Naive thymus-derived CD4-positive, alpha-beta T cell (primary cell): ENCODE measurements at regions of chr2 and their contacts with region 1.

Region 1: DNA sequence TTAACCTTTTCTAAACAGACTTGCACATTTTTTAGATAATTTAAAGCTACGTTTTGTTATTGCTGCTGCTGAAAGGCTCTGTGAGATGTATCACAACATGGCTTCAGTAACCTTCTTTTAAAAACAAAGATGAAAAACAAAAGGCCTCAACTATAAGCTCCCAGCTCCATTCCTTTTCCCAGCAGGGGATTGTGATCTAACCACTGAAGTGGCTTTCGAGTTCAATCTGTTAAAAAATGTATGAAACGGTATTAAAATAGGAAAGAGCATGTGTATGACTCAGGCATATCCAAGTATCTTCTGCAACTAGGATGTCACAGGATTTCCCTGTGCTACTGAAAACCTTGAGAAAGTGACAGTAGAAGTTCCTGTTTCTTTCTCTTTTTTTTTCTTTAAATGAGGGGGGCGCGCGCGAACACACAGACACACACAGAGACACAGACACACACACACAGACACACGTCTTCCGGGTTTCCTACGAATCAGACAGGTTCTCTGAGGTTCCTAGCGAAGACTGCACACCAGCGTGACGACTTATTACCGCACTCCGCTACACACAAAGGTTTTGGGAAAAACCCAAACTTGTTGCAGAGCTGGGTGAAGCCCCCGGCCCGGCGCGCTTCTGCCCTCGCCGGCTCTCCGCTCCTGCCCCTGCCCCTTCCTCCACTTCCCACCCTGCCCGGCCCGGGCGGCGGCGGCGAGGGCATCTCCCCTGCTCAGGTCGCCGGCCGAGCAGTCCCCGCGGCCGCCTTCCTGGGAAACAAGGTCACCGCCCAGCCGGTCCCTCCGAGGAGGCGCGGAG is 86.8 kb downstream of the RBMS1 start:
- DNase-seq: peak; percentile 60 to 95 (median 85)
- ATAC-seq: peak; percentile 92
- H3K4me3 ChIP-seq: peak overlapping the region; percentile 57
- H3K4me3 Mint-ChIP-seq: peak overlapping the region; percentile 87 to 99 (median 92)
- H3K27ac ChIP-seq: peak overlapping the region; percentile 99
- H3K27ac Mint-ChIP-seq: peak overlapping the region; percentile 90 to 99 (median 95)
- H3K4me1 ChIP-seq: peaks cover 54 to 64% of the 10 kb centered on the region in 2 donors
- H3K4me1 Mint-ChIP-seq: peaks cover 37 to 89% (median 80%) of the 10 kb centered on the region in 7 donors
- H3K27me3 ChIP-seq: no peaks in the 10 kb centered on the region
- H3K27me3 Mint-ChIP-seq: peaks cover 0 to 4% (median 0%) of the 10 kb centered on the region in 5 donors

Region 2: GRCh38 chr2:160269803-160270570 is 136.8 kb before region 1 on chr2:
- CTCF ChIA-PET with region 1: no interaction called
- POLR2A ChIA-PET with region 1: interaction called, 3 read pairs
- intact Hi-C with region 1: loop called in 1 of 2 experiments (anchors 5 kb)
- DNase-seq: peak; percentile 43 to 68 (median 63)
- ATAC-seq: peak; percentile 89
- H3K4me3 ChIP-seq: peak overlapping the region; percentile 59
- H3K4me3 Mint-ChIP-seq: peak overlapping the region; percentile 75 to 95 (median 88)
- H3K27ac ChIP-seq: peak overlapping the region; percentile 66
- H3K27ac Mint-ChIP-seq: peak overlapping the region; percentile 42 to 97 (median 89)
- H3K4me1 ChIP-seq: peaks cover 5 to 7% of the 10 kb centered on the region in 2 donors
- H3K4me1 Mint-ChIP-seq: peaks cover 9 to 44% (median 32%) of the 10 kb centered on the region in 7 donors
- H3K27me3 ChIP-seq: no peaks in the 10 kb centered on the region
- H3K27me3 Mint-ChIP-seq: peaks cover 0 to 10% (median 0%) of the 10 kb centered on the region in 5 donors

Region 3: GRCh38 chr2:160353166-160353565 is 53.6 kb before region 1 on chr2:
- CTCF ChIA-PET with region 1: no interaction called
- POLR2A ChIA-PET with region 1: interaction called, 3 read pairs
- intact Hi-C with region 1: loop called in 1 of 2 experiments (anchors 1 kb)
- DNase-seq: peak in 6 of 9 donors; percentile 14 to 45 (median 24)
- ATAC-seq: peak; percentile 72
- H3K4me3 ChIP-seq: no peak overlapping the region
- H3K4me3 Mint-ChIP-seq: peak overlapping the region in 1 of 10 donors; percentile 36
- H3K27ac ChIP-seq: no peak overlapping the region
- H3K27ac Mint-ChIP-seq: peak overlapping the region in 4 of 9 donors; percentile 51 to 81 (median 66)
- H3K4me1 ChIP-seq: peaks cover 0 to 5% of the 10 kb centered on the region in 2 donors
- H3K4me1 Mint-ChIP-seq: peaks cover 47 to 91% (median 83%) of the 10 kb centered on the region in 7 donors
- H3K27me3 ChIP-seq: no peaks in the 10 kb centered on the region
- H3K27me3 Mint-ChIP-seq: no peaks in the 10 kb centered on the region

Region 4: DNA sequence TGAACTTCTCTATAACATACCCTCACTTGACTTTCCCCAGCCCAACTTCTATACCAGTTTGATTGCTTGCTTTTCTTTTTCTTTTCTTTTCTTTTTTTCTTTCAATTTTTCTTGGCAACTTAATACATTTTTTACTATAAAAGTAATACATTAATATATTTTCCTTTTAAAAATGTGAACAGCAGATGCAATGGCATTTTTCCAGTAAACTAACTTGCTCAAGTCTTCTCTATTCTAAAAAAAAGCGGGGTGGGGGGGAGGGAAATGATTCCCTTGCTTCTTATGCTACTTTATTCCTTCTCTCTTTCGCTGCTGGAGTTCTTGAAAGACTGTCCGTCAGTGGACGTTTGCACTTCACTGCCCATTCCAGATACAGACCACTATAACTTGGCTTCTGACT is 16.3 kb after region 1 on chr2:
- CTCF ChIA-PET with region 1: interaction called, 15 read pairs
- POLR2A ChIA-PET with region 1: interaction called, 57 read pairs
- intact Hi-C with region 1: loop called (anchors 1 kb)
- DNase-seq: no peak
- ATAC-seq: no peak
- H3K4me3 ChIP-seq: no peak overlapping the region
- H3K4me3 Mint-ChIP-seq: peak overlapping the region in 5 of 10 donors; percentile 16 to 69 (median 64)
- H3K27ac ChIP-seq: no peak overlapping the region
- H3K27ac Mint-ChIP-seq: peak overlapping the region in 7 of 9 donors; percentile 6 to 83 (median 61)
- H3K4me1 ChIP-seq: peaks cover 28 to 44% of the 10 kb centered on the region in 2 donors
- H3K4me1 Mint-ChIP-seq: peaks cover 41 to 92% (median 83%) of the 10 kb centered on the region in 7 donors
- H3K27me3 ChIP-seq: no peaks in the 10 kb centered on the region
- H3K27me3 Mint-ChIP-seq: no peaks in the 10 kb centered on the region

Region 5: DNA sequence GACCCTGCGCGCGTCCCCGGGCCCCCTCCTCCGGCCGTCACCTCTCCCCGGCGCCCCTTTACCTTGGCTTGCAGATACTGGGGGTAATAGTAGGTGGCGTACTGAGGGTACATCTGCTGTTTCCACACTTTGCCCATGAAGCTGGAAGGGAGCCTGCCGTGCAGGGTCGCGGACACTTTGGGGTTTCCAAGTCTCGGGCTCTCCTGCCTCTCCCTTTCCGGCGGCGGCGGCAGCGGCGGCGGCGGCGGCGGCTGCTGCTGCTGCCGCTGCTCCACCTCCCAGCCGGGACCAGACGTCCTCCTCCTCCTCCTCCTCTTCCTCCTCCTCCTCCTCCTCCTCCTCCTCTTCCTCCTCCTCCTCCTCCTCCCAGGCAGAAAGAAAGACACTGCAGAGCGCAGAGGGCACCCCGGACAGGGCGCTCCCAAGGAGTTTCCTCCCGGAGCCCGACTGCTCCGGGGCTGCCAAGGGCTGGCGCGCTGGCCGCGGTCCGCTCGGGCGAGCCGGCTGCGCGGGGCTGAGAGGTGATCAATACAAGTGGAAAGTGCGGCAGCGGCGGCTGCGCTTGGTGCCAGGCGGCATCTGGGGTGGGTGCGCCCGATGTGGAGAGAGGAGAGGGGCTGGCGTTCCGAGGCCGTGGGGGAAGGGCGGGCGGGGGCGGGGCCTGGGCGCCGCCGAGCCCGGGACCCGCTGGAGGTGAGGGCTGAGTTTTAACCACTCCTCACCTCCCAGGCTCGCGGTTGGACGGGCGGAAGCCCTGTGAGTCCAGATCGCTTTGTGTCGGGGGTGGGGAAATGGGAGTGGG is 86.6 kb after region 1 on chr2 and contains the start of gene RBMS1:
- CTCF ChIA-PET with region 1: interaction called, 5 read pairs
- POLR2A ChIA-PET with region 1: interaction called, 5 read pairs
- intact Hi-C with region 1: loop called (anchors 1 kb)
- DNase-seq: peak; percentile 36 to 63 (median 57)
- ATAC-seq: peak; percentile 55
- H3K4me3 ChIP-seq: peak within 1 kb of the TSS; percentile 64
- H3K4me3 Mint-ChIP-seq: peak within 1 kb of the TSS; percentile 87 to 98 (median 96)
- H3K27ac ChIP-seq: peak within 1 kb of the TSS; percentile 96
- H3K27ac Mint-ChIP-seq: peak within 1 kb of the TSS; percentile 91 to 98 (median 97)
- H3K4me1 ChIP-seq: peaks cover 3 to 10% of the 10 kb centered on the region in 2 donors
- H3K4me1 Mint-ChIP-seq: peaks cover 17 to 56% (median 47%) of the 10 kb centered on the region in 7 donors
- H3K27me3 ChIP-seq: no peaks in the 10 kb centered on the region
- H3K27me3 Mint-ChIP-seq: peaks cover 0 to 12% (median 0%) of the 10 kb centered on the region in 5 donors
- total RNA-seq, gene RBMS1: 74.4 to 123 (median 101) TPM

Region 6: DNA sequence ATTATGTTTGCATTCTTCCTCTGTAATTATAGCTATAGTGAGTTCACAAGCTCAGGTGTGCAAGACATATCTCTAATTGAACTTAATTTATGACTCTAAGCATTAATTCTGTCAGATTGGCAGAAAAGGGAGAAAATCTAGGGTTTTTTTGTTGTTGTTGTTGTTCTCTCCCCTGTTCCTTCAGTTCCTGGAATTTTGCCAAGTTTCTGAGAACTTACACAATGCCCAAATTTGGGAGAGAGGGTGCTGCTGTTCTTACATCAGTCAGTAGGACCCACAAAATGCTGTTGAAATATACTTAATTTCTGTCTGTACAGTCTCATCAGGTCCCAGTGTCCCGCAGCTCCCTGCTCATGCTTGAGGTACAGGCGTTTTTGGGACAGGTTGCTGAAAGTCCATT is 308.6 kb after region 1 on chr2:
- CTCF ChIA-PET with region 1: no interaction called
- POLR2A ChIA-PET with region 1: no interaction called
- intact Hi-C with region 1: no loop called
- DNase-seq: peak in 1 of 9 donors; percentile 3
- ATAC-seq: no peak
- H3K4me3 ChIP-seq: no peak overlapping the region
- H3K4me3 Mint-ChIP-seq: no peak overlapping the region
- H3K27ac ChIP-seq: no peak overlapping the region
- H3K27ac Mint-ChIP-seq: no peak overlapping the region
- H3K4me1 ChIP-seq: no peaks in the 10 kb centered on the region
- H3K4me1 Mint-ChIP-seq: peaks cover 0 to 6% (median 0%) of the 10 kb centered on the region in 7 donors
- H3K27me3 ChIP-seq: no peaks in the 10 kb centered on the region
- H3K27me3 Mint-ChIP-seq: peaks cover 0 to 10% (median 4%) of the 10 kb centered on the region in 5 donors

Region 7: GRCh38 chr2:161136696-161137324 is 730.0 kb after region 1 on chr2:
- CTCF ChIA-PET with region 1: no interaction called
- POLR2A ChIA-PET with region 1: interaction called, 3 read pairs
- intact Hi-C with region 1: loop called (anchors 5 kb)
- DNase-seq: peak in 6 of 9 donors; percentile 31 to 76 (median 48)
- ATAC-seq: peak; percentile 94
- H3K4me3 ChIP-seq: peak overlapping the region; percentile 67
- H3K4me3 Mint-ChIP-seq: peak overlapping the region; percentile 68 to 98 (median 91)
- H3K27ac ChIP-seq: peak overlapping the region; percentile 83
- H3K27ac Mint-ChIP-seq: peak overlapping the region; percentile 89 to 99 (median 95)
- H3K4me1 ChIP-seq: peaks cover 21 to 27% of the 10 kb centered on the region in 2 donors
- H3K4me1 Mint-ChIP-seq: peaks cover 23 to 71% (median 58%) of the 10 kb centered on the region in 7 donors
- H3K27me3 ChIP-seq: no peaks in the 10 kb centered on the region
- H3K27me3 Mint-ChIP-seq: no peaks in the 10 kb centered on the region